H1 (cell line): ENCODE measurements at regions of chr2 and their contacts with region 1.

Region 1: DNA sequence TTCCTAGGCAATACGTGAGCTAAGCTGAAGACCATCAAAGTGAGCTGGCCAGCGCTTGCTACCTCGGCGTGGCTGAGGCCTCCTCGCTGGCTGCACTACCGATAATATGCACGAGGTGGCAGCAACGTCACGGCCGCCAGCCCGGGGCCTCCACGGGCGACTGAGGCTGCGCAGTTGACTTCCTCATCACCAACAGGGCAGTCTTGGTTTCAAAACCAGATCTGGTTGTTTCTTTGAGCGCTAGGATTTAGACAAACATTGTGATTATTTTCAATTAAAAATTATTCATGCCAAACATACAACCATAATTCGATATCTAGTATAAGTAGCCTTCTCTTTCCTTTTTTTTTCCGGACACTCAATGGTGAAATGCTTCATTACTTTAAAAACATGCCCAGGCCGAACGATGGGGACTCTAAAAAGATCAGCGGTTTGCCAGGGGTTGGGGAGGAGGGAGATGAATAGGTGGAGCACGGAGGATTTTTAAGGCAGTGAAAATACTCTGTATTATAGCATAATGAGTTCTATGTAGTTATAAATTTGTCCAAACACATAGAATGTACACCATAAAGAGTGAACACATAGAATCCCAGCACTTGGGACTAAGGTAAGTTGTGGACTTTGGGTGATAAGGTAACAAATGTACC is 52.0 kb downstream of the CYBRD1 start:
- DNase-seq: peak; percentile 31 to 98
- H3K4me3 ChIP-seq: no peak overlapping the region
- H3K27ac ChIP-seq: no peak overlapping the region
- H3K4me1 ChIP-seq: peaks cover 0 to 2% (median 0%) of the 10 kb centered on the region in 4 experiments; a peak in 1 of 7 replicates
- H3K27me3 ChIP-seq: no peaks in the 10 kb centered on the region
- CTCF ChIP-seq: peak; percentile 92 to 96 (median 95)
- EP300 ChIP-seq: no peak
- POLR2A ChIP-seq: no peak
- RAD21 ChIP-seq: peak; percentile 97 to 100

Region 2: DNA sequence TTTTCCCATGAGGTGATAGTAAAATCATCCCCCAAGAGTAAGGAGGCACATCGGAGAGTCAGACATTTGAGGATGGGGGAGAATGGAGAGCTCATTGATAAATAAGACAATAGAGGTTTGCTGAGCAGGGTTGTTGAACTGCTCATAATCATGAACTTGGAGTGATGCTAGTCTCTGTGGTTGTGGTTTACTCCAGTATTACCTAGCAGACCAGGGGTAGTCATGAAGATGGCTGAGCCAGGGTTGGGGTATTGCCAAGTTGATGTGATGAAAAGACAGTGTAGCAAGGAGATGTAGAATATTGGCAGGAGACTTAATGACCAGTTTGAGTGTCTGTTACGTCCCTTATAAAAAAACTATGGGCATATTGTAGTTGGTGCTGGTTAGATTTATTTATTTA is 26.6 kb before region 1 on chr2:
- CTCF ChIA-PET with region 1: no interaction called
- POLR2A ChIA-PET with region 1: no interaction called
- DNase-seq: no peak
- H3K4me3 ChIP-seq: no peak overlapping the region
- H3K27ac ChIP-seq: no peak overlapping the region
- H3K4me1 ChIP-seq: no peaks in the 10 kb centered on the region
- H3K27me3 ChIP-seq: no peaks in the 10 kb centered on the region
- CTCF ChIP-seq: no peak
- EP300 ChIP-seq: no peak
- POLR2A ChIP-seq: no peak
- RAD21 ChIP-seq: no peak

Region 3: GRCh38 chr2:171598713-171599319 is 24.5 kb after region 1 on chr2:
- CTCF ChIA-PET with region 1: interaction called, 11 read pairs
- POLR2A ChIA-PET with region 1: no interaction called
- DNase-seq: no peak
- H3K4me3 ChIP-seq: no peak overlapping the region
- H3K27ac ChIP-seq: no peak overlapping the region
- H3K4me1 ChIP-seq: no peaks in the 10 kb centered on the region
- H3K27me3 ChIP-seq: no peaks in the 10 kb centered on the region
- CTCF ChIP-seq: peak; percentile 24 to 83 (median 58)
- EP300 ChIP-seq: no peak
- POLR2A ChIP-seq: no peak
- RAD21 ChIP-seq: peak; percentile 84 to 85